ENCODE measurements at regions of chr2 and their contacts with region 1.

Region 1: GRCh38 chr2:9497017-9497416 is 22.7 kb downstream of the IAH1 start:
- DNase-seq: no peak
- ATAC-seq: no peak
- H3K4me3 ChIP-seq: no peak overlapping the region
- H3K27ac ChIP-seq: no peak overlapping the region
- H3K4me1 ChIP-seq: no peaks in the 10 kb centered on the region
- H3K27me3 ChIP-seq: no peaks in the 10 kb centered on the region
- CTCF ChIP-seq: no peak
- EP300 ChIP-seq: no peak
- POLR2A ChIP-seq: no peak
- RAD21 ChIP-seq: no peak

Region 2: DNA sequence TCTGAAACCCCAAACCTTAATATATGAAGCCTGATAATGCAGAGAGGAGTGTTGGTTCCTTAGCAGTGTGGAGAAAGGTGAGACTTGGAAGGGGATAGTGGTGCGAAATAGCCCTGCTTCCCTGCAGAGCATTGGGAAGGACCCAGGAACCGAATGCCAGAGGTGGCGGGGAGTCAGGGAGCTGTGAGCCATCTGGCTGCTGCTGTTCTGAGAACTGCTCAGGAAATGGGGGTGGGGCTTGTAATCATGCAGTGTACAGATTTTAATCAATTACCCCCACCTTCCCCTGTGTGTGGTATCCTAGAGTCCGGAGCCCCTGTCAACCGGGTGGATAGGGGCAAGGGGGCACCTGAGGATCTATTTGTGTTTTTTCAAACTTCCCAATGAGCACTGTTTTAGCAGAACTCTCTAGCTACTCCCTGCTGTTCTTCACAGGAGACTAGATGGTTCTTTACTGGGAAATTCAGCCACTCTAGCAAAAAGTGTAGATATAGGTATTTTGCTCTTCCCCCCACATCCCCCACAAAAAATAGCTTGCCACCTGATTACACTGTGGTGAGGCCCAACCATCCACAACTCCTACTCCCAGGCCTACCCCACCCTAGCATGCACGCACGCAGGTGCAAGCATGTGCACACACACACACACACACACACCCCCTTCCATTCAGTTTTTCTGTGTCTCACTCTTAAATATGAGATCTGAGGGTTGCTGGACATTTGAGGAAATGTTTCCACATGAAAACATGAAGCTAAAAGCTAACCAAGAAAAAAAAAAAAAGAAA is 463.4 kb before region 1 on chr2:
- CTCF ChIA-PET with region 1: no interaction called
- POLR2A ChIA-PET with region 1: no interaction called
- in situ Hi-C with region 1: no loop called
- intact Hi-C with region 1: no loop called
- DNase-seq: peak; percentile 28 to 69 (median 44)
- ATAC-seq: peak; percentile 91
- H3K4me3 ChIP-seq: no peak overlapping the region
- H3K27ac ChIP-seq: peak overlapping the region; percentile 21; the same call in 1 of the 3 replicates
- H3K4me1 ChIP-seq: peaks cover 7 to 19% of the 10 kb centered on the region in 2 experiments; a peak in 4 of 5 replicates
- H3K27me3 ChIP-seq: no peaks in the 10 kb centered on the region
- CTCF ChIP-seq: no peak
- EP300 ChIP-seq: peak; percentile 58; the same call in 1 of the 2 replicates
- POLR2A ChIP-seq: 0 out of 2 replicates have a peak, but pooled peaks have one; percentile 28
- RAD21 ChIP-seq: no peak

Region 3: DNA sequence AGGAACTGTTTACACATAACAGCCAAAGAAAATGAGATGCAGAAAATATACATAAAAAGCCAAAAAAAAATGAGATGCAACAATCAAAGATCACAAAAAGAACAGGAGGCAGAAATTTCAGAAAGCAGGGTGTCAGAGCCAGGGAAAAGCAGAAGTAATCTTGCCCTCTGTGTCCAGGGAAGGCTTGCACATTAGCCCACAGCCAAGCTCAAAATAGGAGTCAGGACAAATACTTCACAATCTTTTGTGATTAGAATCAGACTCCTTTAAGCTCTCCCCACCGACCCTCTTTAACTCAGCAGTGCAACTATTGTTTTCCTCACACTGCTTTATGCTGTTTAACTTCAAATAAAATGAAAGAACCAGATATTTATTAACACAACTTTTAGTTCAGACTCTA is 11.9 kb after region 1 on chr2:
- CTCF ChIA-PET with region 1: no interaction called
- POLR2A ChIA-PET with region 1: interaction called, 11 read pairs
- in situ Hi-C with region 1: no loop called
- intact Hi-C with region 1: no loop called
- DNase-seq: no peak
- ATAC-seq: no peak
- H3K4me3 ChIP-seq: no peak overlapping the region
- H3K27ac ChIP-seq: no peak overlapping the region
- H3K4me1 ChIP-seq: no peaks in the 10 kb centered on the region
- H3K27me3 ChIP-seq: no peaks in the 10 kb centered on the region
- CTCF ChIP-seq: no peak
- EP300 ChIP-seq: no peak
- POLR2A ChIP-seq: no peak
- RAD21 ChIP-seq: no peak

Region 4: DNA sequence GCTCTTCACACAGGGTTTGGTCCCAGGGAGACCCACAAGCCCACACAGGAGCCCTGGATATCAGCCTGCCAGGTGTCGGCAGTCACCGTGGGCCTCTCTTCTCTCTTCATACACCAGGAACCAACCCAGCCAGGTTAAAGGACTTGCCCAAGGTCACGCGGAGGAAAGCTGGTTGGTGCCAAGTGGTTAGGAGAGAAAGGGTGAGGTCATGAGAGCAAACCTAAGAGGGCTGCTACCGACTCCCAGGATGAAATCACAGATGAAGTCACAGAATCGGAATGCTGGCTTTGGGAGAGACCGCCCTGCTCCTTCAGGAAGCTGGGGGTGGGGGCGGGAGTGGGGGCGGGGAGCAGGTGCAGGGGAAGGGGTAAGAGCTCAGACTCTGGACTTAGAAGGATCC is 323.0 kb after region 1 on chr2:
- CTCF ChIA-PET with region 1: no interaction called
- POLR2A ChIA-PET with region 1: no interaction called
- in situ Hi-C with region 1: no loop called
- intact Hi-C with region 1: no loop called
- DNase-seq: no peak
- ATAC-seq: no peak
- H3K4me3 ChIP-seq: no peak overlapping the region
- H3K27ac ChIP-seq: no peak overlapping the region
- H3K4me1 ChIP-seq: peaks cover 0 to 10% of the 10 kb centered on the region in 2 experiments; a peak in 3 of 5 replicates
- H3K27me3 ChIP-seq: no peaks in the 10 kb centered on the region
- CTCF ChIP-seq: no peak
- EP300 ChIP-seq: no peak
- POLR2A ChIP-seq: no peak
- RAD21 ChIP-seq: no peak

Measured in K562 (cell line).